ENCODE measurements at regions of chr17 and their contacts with region 1.

Region 1: DNA sequence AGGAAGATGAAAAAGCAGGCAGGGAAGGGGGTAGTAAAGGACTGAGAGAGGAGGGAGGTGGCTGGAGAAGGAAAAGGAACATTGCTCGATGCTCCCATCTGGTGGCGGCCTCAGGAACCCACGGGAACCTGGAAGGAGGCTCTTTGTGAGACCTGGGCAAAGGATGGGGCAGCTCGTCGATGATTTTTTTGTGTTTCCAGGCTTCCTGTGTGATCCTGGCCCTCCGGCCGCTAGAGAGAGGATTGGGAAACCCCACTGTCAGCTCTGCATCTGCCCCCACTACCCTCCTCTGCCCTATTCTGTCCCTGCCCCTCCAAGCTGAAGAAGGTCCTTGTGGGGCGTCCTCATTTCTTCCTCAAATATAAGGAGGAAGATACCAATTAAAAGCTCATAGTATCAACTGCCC is 6.6 kb downstream of the WFIKKN2 start:
- DNase-seq: no peak
- H3K4me3 ChIP-seq: no peak overlapping the region
- H3K27ac ChIP-seq: no peak overlapping the region
- H3K4me1 ChIP-seq: peaks cover 0 to 6% (median 0%) of the 10 kb centered on the region in 6 donors
- H3K27me3 ChIP-seq: no peaks in the 10 kb centered on the region
- CTCF ChIP-seq: peak; percentile 57 to 88 (median 80)
- POLR2A ChIP-seq: no peak

Region 2: DNA sequence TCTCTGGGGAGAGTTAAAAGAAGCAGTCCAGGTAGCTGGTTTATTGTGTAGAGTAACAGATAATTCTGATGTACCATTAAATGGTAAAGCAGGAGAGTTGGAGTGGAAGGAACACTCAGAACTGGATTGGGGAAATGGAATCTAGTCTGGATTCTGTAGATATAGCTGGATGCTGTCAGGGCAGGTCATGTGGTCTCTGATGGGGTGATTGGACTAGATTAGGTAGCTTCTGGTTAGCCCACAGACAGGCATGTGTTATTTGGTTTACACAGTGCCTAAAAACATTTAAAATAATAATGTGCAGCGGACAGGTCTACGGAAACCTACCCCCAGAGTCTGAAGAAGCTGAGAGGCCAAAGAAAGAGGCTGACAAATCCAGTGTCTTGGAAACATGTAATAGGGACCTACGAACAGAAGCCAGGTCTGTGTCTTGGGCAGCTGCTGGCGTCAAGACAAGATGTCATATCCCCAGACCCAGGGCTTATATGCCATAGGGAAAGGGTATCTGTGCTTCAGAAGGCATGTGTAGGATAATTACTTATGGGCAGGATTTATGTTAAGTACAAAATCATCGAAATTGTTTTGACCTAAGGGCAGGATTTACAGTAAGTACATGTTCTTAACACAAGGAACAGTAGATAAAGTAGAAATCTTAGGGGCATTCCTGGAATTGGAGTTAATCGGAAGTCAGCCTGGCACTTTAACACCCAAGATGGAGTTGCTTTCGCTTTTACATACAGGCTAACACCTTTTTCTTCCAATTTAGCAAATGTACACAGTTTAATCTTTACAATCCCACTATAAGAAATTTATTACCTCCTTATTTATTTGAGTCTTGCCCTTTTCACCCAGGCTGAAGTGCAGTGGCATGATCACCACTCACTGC is 110.1 kb before region 1 on chr17:
- intact Hi-C with region 1: no loop called
- DNase-seq: no peak
- H3K4me3 ChIP-seq: no peak overlapping the region
- H3K27ac ChIP-seq: peak overlapping the region in 5 of 8 donors; percentile 7 to 52 (median 28)
- H3K4me1 ChIP-seq: peaks cover 11 to 100% (median 86%) of the 10 kb centered on the region in 6 donors
- H3K27me3 ChIP-seq: no peaks in the 10 kb centered on the region
- CTCF ChIP-seq: no peak
- POLR2A ChIP-seq: no peak

Region 3: GRCh38 chr17:50783193-50783660 is 58.7 kb before region 1 on chr17:
- intact Hi-C with region 1: loop called (anchors 2 kb)
- DNase-seq: peak; percentile 95
- H3K4me3 ChIP-seq: no peak overlapping the region
- H3K27ac ChIP-seq: no peak overlapping the region
- H3K4me1 ChIP-seq: peaks cover 0 to 24% (median 9%) of the 10 kb centered on the region in 6 donors
- H3K27me3 ChIP-seq: peaks cover 0 to 23% (median 0%) of the 10 kb centered on the region in 7 donors
- CTCF ChIP-seq: peak; percentile 92 to 99 (median 98)
- POLR2A ChIP-seq: no peak

Measured in spleen (tissue), 13 donors.